MCF 10A (cell line): ENCODE measurements at regions of chr6 and their contacts with region 1.

Region 1: DNA sequence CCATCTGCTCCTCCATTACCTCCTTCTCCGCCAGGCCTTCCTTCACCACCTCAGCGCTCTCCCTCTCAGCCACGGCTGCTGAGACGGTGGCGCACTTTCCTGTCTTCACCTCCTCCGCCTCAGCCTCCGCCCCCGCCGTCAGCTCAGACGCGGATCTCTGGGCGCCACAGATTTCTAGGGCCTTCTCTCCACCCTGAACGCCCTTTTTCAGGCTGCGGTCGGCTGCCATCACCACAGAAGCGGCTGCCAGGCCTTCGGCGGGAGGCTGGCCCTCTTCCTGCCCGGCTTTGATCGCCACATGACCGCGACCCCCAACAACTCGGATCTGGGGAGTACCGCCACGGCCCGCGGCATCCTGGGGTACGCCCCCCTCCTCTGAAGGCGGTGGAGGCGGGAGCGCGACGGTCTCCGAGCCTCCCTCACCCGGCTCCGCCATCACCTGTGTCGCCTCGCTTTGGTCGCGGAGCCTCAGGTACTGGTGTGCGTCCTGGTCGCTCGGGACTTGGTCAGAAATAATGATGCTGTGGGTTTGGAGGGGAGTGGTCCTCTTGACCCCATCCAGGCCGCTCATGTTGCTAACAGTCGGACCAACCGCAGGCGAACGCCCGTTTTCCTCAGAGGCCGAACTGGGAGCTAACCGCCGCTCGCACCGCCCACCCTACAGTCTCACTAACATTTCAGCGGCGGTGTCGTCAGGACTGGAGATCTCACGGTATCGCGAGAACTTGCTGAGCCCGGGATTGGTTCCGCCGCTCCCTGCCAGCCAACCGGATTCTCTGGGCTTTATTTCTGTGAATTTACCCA is at the start of gene TSPYL1:
- DNase-seq: peak; percentile 98
- H3K4me3 Mint-ChIP-seq: peak within 1 kb of the TSS; percentile 86
- H3K27ac Mint-ChIP-seq: peak within 1 kb of the TSS; percentile 85
- H3K4me1 Mint-ChIP-seq: peaks cover 33% of the 10 kb centered on the region
- H3K27me3 Mint-ChIP-seq: no peaks in the 10 kb centered on the region
- CTCF ChIP-seq: no peak
- total RNA-seq, gene TSPYL1: 67.4 and 85.0 TPM in 2 replicates

Region 2: GRCh38 chr6:116200619-116201249 is 78.7 kb before region 1 on chr6:
- CTCF ChIA-PET with region 1: no interaction called
- POLR2A ChIA-PET with region 1: no interaction called
- intact Hi-C with region 1: no loop called
- DNase-seq: no peak
- H3K4me3 Mint-ChIP-seq: no peak overlapping the region
- H3K27ac Mint-ChIP-seq: no peak overlapping the region
- H3K4me1 Mint-ChIP-seq: peaks cover 14% of the 10 kb centered on the region
- H3K27me3 Mint-ChIP-seq: no peaks in the 10 kb centered on the region
- CTCF ChIP-seq: no peak

Region 3: DNA sequence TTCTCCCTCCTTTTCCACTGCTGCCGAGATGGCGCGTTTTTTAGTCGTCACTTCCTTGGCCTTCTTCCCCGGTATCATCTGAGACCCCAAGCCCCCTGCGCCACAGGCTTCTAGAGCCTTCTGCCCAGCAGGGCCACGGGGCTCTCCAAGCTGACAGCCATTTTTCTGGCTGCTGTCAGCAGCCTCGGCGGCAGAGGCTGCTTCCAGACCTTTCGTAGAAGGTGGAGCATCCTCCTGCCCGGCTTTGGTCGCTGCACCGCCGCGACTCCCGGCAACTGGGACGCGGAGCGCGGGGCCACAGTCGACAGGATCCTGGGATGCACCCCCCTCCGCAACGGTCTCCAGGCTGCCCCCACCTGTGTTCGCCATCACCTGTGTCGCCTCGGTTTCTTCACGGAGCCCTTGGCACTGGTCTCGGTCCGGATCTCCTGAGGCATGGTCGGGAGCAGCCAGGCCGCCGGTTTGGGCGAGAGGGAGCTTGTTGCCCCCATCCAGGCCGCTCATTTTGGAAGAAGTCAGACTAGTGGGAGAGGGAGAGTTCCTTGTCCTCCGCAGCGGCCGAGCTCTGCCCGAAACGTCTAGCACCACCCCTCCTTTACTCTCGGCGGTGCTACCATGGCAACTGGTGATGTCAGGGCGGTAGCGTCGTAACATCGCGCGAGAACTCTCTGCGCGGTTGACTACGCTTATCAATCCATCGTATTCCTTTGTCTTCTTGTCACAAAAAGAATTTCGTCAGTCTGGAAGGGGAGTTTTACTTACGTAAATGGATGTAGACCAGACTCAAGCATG is 25.8 kb before region 1 on chr6 and contains the start of gene TSPYL4:
- CTCF ChIA-PET with region 1: interaction called, 12 read pairs
- POLR2A ChIA-PET with region 1: interaction called, 69 read pairs
- intact Hi-C with region 1: no loop called
- DNase-seq: peak; percentile 96
- H3K4me3 Mint-ChIP-seq: no peak within 1 kb of the TSS
- H3K27ac Mint-ChIP-seq: no peak within 1 kb of the TSS
- H3K4me1 Mint-ChIP-seq: peaks cover 22% of the 10 kb centered on the region
- H3K27me3 Mint-ChIP-seq: no peaks in the 10 kb centered on the region
- CTCF ChIP-seq: no peak
- total RNA-seq, gene TSPYL4: 9.1 and 9.8 TPM in 2 replicates

Region 4: DNA sequence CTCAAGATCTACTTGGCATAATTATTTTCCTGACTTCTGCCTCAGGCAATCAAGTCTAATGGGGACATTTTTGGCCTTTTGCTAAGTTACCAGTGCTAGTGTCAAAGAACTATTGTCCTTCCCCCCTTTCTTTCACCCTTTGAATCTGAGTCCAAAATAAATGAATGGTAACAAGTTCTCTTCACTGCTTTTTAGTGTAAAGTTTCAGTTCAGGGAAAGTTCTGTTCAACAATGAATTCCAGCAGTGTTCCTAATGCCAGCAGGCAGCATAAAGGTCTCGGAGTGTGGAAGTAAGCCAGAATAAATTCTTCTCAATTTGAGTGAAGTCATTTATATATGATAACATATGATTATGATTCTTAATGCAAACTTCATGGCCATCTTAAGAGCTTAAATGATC is 21.1 kb after region 1 on chr6:
- CTCF ChIA-PET with region 1: no interaction called
- POLR2A ChIA-PET with region 1: no interaction called
- intact Hi-C with region 1: no loop called
- DNase-seq: no peak
- H3K4me3 Mint-ChIP-seq: no peak overlapping the region
- H3K27ac Mint-ChIP-seq: no peak overlapping the region
- H3K4me1 Mint-ChIP-seq: no peaks in the 10 kb centered on the region
- H3K27me3 Mint-ChIP-seq: no peaks in the 10 kb centered on the region
- CTCF ChIP-seq: no peak

Region 5: GRCh38 chr6:116371120-116371917 is 91.9 kb after region 1 on chr6:
- CTCF ChIA-PET with region 1: interaction called, 3 read pairs
- POLR2A ChIA-PET with region 1: interaction called, 135 read pairs
- intact Hi-C with region 1: no loop called
- DNase-seq: peak; percentile 94
- H3K4me3 Mint-ChIP-seq: peak overlapping the region; percentile 85
- H3K27ac Mint-ChIP-seq: peak overlapping the region; percentile 88
- H3K4me1 Mint-ChIP-seq: peaks cover 32% of the 10 kb centered on the region
- H3K27me3 Mint-ChIP-seq: no peaks in the 10 kb centered on the region
- CTCF ChIP-seq: no peak

Region 6: GRCh38 chr6:116405138-116405537 is 125.7 kb after region 1 on chr6:
- CTCF ChIA-PET with region 1: interaction called, 3 read pairs
- POLR2A ChIA-PET with region 1: interaction called, 19 read pairs
- intact Hi-C with region 1: no loop called
- DNase-seq: no peak
- H3K4me3 Mint-ChIP-seq: no peak overlapping the region
- H3K27ac Mint-ChIP-seq: no peak overlapping the region
- H3K4me1 Mint-ChIP-seq: peaks cover 21% of the 10 kb centered on the region
- H3K27me3 Mint-ChIP-seq: no peaks in the 10 kb centered on the region
- CTCF ChIP-seq: no peak

Region 7: DNA sequence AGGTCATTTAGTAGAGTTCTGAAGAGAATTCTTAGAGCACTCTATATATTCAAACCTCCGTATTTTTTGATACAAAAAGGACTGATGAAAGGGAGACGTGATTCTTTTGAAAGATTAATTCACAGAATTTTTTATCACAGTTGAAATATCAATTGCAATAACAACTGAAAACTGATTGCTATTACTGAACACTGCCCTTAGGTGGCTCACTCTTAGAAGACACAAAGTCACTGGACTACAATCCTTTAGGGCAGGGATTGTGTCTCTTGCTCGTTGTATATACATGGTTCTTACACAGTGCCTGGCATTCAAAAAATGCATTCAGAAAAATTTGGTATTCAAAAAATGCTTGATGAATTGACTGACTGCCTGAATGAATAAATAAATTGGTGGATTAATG is 164.6 kb after region 1 on chr6:
- CTCF ChIA-PET with region 1: no interaction called
- POLR2A ChIA-PET with region 1: interaction called, 18 read pairs
- intact Hi-C with region 1: no loop called
- DNase-seq: peak; percentile 53
- H3K4me3 Mint-ChIP-seq: no peak overlapping the region
- H3K27ac Mint-ChIP-seq: peak overlapping the region; percentile 37
- H3K4me1 Mint-ChIP-seq: peaks cover 24% of the 10 kb centered on the region
- H3K27me3 Mint-ChIP-seq: no peaks in the 10 kb centered on the region
- CTCF ChIP-seq: peak; percentile 54

Region 8: DNA sequence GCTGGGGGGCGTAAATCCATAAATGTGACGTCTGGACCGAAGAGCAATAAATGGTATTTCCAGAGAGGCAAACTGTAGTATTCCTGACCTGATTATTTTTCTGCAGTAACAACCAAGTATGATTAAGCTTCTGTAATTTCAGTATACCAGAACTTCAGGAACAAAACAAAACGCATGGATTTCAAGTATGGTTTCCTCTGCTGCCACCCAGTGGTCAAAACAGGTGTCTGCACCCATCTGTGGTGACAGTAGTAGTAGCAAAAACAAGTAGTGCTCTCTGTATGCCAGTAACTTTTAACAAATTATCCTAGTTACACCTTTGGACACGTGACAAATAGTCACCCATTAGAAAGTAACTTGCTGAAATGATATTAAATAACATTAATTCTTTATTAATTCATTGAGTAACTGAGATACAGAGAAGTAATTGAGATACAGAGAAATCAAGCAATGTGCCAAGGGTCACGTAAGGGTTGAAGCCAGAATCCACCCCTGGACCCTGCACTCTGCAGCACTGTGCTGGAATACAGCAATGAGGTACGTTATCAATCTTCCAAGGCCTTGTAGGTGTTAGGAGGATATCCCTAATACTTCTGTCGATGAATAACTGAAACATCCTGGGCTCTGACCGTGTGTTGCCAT is 282.0 kb after region 1 on chr6:
- CTCF ChIA-PET with region 1: interaction called, 11 read pairs
- POLR2A ChIA-PET with region 1: interaction called, 12 read pairs
- intact Hi-C with region 1: no loop called
- DNase-seq: peak; percentile 75
- H3K4me3 Mint-ChIP-seq: no peak overlapping the region
- H3K27ac Mint-ChIP-seq: no peak overlapping the region
- H3K4me1 Mint-ChIP-seq: peaks cover 6% of the 10 kb centered on the region
- H3K27me3 Mint-ChIP-seq: no peaks in the 10 kb centered on the region
- CTCF ChIP-seq: peak; percentile 81

Region 9: GRCh38 chr6:116667623-116668022 is 388.2 kb after region 1 on chr6:
- CTCF ChIA-PET with region 1: no interaction called
- POLR2A ChIA-PET with region 1: interaction called, 17 read pairs
- intact Hi-C with region 1: no loop called
- DNase-seq: peak; percentile 5
- H3K4me3 Mint-ChIP-seq: peak overlapping the region; percentile 93
- H3K27ac Mint-ChIP-seq: peak overlapping the region; percentile 96
- H3K4me1 Mint-ChIP-seq: peaks cover 33% of the 10 kb centered on the region
- H3K27me3 Mint-ChIP-seq: no peaks in the 10 kb centered on the region
- CTCF ChIP-seq: no peak